HAP-1 (cell line): ENCODE measurements at regions of chr11 and their contacts with region 1.

Region 1: DNA sequence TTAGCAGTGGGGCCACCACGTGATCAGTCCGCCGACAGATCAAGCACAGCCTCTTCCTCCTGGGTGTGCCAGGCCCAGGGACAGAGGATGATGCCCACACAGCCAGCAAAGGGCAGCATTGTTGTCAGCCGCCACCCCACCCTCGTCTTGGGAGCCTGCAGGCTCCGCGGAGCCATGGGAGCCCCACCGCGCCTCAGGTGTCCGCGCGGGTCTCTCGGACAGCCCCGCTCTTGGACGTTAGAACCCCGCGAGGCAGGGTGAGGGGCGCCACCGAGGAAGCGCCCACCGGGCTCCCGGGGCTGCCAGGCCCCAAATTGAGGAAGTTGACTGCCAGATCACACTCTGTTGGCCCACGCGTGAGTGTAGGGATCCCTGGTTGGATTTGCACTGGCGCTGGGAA is 83.9 kb upstream of the MS4A8 start:
- DNase-seq: no peak
- H3K4me3 ChIP-seq: no peak overlapping the region
- H3K4me1 ChIP-seq: no peaks in the 10 kb centered on the region
- H3K27me3 ChIP-seq: no peaks in the 10 kb centered on the region

Region 2: GRCh38 chr11:60363542-60364510 is 251.7 kb before region 1 on chr11:
- in situ Hi-C with region 1: loop called (anchors 10 kb)
- DNase-seq: peak; percentile 75 to 79
- H3K4me3 ChIP-seq: no peak overlapping the region
- H3K4me1 ChIP-seq: peaks cover 11% of the 10 kb centered on the region
- H3K27me3 ChIP-seq: no peaks in the 10 kb centered on the region